ENCODE measurements at regions of chr15 and their contacts with region 1.

Region 1: DNA sequence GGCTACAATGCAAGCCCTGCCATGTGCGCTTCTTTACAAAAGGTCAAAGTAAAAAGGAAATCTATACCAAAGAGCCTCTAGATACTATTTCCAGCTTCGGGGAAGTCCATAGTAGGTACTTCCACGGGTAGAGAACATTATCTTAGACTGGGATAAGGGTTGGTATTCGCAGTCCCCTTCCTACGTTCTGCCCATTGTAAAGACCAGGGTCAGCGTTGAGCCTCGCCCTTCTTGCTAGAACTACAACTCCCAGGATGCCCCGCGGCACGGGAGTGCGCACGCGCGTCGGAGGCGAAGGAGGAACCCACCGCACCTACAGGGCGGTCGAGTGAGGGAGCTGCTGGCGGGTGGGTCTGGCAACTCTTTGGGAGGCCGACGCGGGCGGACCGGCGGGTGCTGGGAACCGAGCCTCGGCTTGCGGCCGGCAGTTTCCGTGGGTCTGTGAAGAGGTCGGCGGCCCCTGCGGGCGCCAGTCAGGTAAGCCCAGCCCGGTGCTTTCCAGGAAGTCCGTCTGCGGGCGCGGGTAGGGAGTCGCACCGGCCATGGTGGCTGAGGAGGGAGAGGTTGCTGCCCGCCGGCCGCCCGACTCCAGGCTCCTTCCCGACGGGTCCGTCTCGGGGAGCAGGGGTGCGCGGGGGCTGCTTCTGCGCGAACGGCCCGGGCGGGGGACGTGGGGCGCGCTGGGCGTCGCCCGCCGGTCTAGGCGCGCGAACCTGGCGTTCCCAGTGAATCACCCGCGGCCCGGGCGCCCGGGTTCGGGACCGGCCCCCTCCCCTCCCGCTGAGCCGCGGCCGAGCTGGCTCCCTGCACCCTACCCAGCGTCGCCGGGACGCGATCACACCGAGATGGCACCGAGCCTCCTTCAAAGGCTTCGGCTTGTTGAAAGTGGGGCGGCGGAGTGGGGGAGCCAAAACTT is at the start of gene TMOD3:
- DNase-seq: peak; percentile 94
- H3K4me3 Mint-ChIP-seq: peak within 1 kb of the TSS; percentile 95
- H3K27ac Mint-ChIP-seq: peak within 1 kb of the TSS; percentile 91
- H3K4me1 Mint-ChIP-seq: peaks cover 50% of the 10 kb centered on the region
- H3K27me3 Mint-ChIP-seq: no peaks in the 10 kb centered on the region
- CTCF ChIP-seq: no peak
- total RNA-seq, gene TMOD3: 53.6 and 60.1 TPM in 2 replicates

Region 2: GRCh38 chr15:51708013-51708412 is 121.6 kb before region 1 on chr15:
- CTCF ChIA-PET with region 1: no interaction called
- intact Hi-C with region 1: no loop called
- DNase-seq: no peak
- H3K4me3 Mint-ChIP-seq: no peak overlapping the region
- H3K27ac Mint-ChIP-seq: no peak overlapping the region
- H3K4me1 Mint-ChIP-seq: no peaks in the 10 kb centered on the region
- H3K27me3 Mint-ChIP-seq: no peaks in the 10 kb centered on the region
- CTCF ChIP-seq: no peak

Region 3: DNA sequence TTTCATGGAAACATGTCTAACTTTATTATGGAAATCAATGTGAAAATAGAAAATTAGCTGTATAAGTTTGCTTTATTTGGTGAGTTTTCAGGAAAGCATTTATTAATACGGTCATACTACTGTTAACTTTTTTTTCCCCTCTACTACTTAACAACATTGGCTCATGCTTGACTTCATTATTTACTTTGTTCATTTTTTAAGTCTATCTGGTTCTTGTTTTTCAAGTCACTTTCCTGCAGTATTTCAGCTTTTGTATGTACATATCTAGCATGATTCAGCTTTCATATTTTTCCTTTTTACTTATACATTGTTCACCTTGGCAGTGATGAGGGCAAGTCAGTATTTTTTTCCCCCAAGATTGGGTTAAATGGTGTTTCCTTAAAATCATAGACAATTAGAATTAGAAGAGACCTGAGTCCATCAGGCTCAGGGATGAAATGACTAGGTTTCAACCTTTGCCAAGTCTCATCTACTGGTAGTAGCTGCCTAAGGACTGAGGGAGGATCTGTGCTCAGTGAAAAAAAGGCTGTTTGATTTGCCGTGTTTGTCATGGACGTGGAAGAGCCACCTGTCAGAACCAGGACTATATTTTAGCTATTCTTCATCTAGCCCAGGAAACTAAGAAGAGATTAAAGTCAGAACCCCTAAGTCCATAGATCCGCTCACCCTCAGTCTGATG is 15.3 kb after region 1 on chr15:
- CTCF ChIA-PET with region 1: interaction called, 4 read pairs
- intact Hi-C with region 1: loop called (anchors 2 kb)
- DNase-seq: no peak
- H3K4me3 Mint-ChIP-seq: no peak overlapping the region
- H3K27ac Mint-ChIP-seq: peak overlapping the region; percentile 77
- H3K4me1 Mint-ChIP-seq: peaks cover 76% of the 10 kb centered on the region
- H3K27me3 Mint-ChIP-seq: no peaks in the 10 kb centered on the region
- CTCF ChIP-seq: no peak

Region 4: DNA sequence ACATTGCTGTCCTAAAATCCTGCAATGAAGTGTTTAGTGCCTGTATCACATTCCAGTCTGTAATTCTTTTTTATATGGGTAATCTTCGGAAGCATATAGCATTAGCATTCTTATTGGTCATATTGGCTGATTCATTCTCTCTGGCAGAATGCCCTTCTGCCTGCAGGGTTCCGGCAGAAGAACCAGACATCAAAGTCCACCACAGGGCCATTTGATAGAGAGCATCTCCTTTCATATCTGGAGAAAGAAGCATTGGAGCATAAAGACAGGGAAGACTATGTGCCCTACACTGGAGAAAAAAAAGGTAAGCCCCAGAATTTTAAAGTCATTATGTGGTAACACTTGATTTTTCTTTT is 39.4 kb after region 1 on chr15:
- CTCF ChIA-PET with region 1: no interaction called
- intact Hi-C with region 1: loop called (anchors 5 kb)
- DNase-seq: peak; percentile 3
- H3K4me3 Mint-ChIP-seq: no peak overlapping the region
- H3K27ac Mint-ChIP-seq: no peak overlapping the region
- H3K4me1 Mint-ChIP-seq: peaks cover 33% of the 10 kb centered on the region
- H3K27me3 Mint-ChIP-seq: no peaks in the 10 kb centered on the region
- CTCF ChIP-seq: no peak

Measured in Calu3 (cell line).